ENCODE measurements at regions of chr3 and their contacts with region 1.

Region 1: GRCh38 chr3:48088749-48089466 is 72.7 kb upstream of the MAP4 start:
- DNase-seq: peak; percentile 96
- H3K4me3 ChIP-seq: peak overlapping the region; percentile 72 to 92
- H3K27ac ChIP-seq: peak overlapping the region; percentile 92 to 96
- H3K4me1 ChIP-seq: peaks cover 3% of the 10 kb centered on the region
- H3K27me3 ChIP-seq: no peaks in the 10 kb centered on the region
- CTCF ChIP-seq: peak in 2 of 4 experiments; percentile 6 to 16
- POLR2A ChIP-seq: peak; percentile 92

Region 2: GRCh38 chr3:48013288-48013980 is 75.5 kb before region 1 on chr3:
- intact Hi-C with region 1: loop called (anchors 5 kb)
- DNase-seq: peak; percentile 22
- H3K4me3 ChIP-seq: no peak overlapping the region
- H3K27ac ChIP-seq: peak overlapping the region; percentile 18 to 36
- H3K4me1 ChIP-seq: peaks cover 6% of the 10 kb centered on the region
- H3K27me3 ChIP-seq: no peaks in the 10 kb centered on the region
- CTCF ChIP-seq: no peak
- POLR2A ChIP-seq: no peak

Measured in prostate gland (tissue), 2 donors.